ENCODE measurements at regions of chr4 and their contacts with region 1.

Region 1: DNA sequence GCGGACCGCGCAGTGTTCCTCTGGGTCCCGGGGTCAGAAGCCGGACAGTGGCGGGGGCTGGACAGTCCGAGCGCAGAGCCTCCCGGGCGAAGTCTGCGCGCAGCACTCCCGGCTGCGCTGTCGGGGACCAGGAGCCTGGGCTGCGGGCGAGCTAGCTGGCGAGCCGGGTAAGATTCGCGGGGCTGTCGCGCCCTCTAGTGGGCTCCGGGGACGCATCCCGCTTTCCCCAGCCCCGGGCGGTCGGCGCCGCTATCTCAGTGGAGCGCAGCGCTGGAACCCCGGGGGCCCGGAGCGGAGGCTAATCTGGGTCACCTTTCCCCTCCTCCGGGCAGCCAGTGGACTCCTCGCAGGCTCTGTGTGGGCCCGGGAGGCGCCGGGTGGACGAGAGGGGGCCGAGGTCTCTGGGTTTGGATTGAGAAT is 4.2 kb downstream of the PDGFRA start:
- H3K4me3 Mint-ChIP-seq: peak overlapping the region; percentile 77
- H3K27ac Mint-ChIP-seq: peak overlapping the region; percentile 38
- H3K4me1 Mint-ChIP-seq: peaks cover 52% of the 10 kb centered on the region
- H3K27me3 Mint-ChIP-seq: peaks cover 75% of the 10 kb centered on the region

Region 2: GRCh38 chr4:53015681-53016080 is 1217.6 kb before region 1 on chr4:
- intact Hi-C with region 1: loop called (anchors 5 kb)
- H3K4me3 Mint-ChIP-seq: no peak overlapping the region
- H3K27ac Mint-ChIP-seq: no peak overlapping the region
- H3K4me1 Mint-ChIP-seq: peaks cover 21% of the 10 kb centered on the region
- H3K27me3 Mint-ChIP-seq: no peaks in the 10 kb centered on the region

Region 3: DNA sequence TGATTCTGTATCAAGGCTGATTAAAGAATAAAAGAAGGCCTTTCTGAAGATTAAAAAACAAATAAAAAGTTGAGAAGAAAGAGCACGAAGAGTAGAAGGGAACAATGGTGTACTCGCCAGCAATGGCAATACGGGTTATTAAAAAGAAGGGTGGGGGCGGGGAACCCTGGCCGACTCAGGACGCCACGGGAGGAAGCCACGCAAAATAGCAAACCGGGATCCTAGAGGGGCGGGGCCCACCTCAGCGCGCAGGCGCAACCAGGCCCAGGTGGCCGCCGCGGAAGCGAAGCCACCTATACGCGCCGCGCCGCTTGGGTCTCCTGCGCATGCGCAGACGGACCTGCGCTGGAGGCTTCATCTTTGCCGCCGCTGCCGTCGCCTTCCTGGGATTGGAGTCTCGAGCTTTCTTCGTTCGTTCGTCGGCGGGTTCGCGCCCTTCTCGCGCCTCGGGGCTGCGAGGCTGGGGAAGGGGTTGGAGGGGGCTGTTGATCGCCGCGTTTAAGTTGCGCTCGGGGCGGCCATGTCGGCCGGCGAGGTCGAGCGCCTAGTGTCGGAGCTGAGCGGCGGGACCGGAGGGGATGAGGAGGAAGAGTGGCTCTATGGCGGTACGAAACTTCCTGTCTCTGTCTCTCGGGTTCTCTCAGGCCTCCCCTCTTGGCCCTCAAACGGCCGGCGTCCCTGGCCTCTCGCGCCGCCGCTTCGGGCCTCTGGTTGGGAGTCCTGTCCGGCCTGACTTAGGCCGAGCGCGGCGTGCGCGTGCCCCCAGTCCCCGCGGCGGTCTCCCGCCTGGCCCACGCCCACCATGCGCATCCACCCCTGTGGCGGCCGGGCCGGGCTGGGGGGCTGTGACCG is 855.7 kb before region 1 on chr4 and contains the start of gene FIP1L1:
- intact Hi-C with region 1: loop called (anchors 5 kb)
- H3K4me3 Mint-ChIP-seq: peak within 1 kb of the TSS; percentile 99
- H3K27ac Mint-ChIP-seq: peak within 1 kb of the TSS; percentile 98
- H3K4me1 Mint-ChIP-seq: peaks cover 27% of the 10 kb centered on the region
- H3K27me3 Mint-ChIP-seq: no peaks in the 10 kb centered on the region

Region 4: DNA sequence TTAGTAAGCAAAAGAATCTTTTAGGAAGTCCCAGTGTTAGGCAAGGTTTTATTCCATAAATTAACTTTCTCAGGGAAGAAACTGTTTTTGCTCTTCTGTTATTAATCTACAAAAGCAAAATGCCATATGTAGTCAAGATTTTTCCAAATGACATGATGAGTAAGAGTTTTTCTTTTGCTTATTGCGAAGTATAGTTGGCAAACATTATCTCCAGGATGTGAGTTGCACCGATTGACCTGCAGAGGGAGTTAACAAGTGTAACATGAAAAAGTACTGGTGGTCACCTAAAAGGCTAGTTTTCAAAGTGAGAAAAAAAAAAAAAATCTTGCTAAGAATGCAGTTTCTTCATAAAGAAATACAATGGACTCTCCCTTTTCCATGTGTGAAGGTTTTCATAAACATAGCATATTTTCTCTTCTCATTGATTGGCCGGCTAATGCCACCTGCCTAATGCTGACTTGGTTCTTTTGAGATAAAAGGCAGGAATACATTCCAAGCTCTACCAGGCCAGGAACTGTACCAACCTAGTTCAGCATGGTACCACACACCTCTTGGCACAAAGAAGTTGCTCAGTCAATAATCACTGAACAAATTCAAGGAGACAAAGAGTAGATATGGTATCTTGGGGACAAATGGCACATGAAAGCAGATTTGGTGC is 742.2 kb before region 1 on chr4:
- intact Hi-C with region 1: loop called (anchors 10 kb)
- H3K4me3 Mint-ChIP-seq: no peak overlapping the region
- H3K27ac Mint-ChIP-seq: no peak overlapping the region
- H3K4me1 Mint-ChIP-seq: no peaks in the 10 kb centered on the region
- H3K27me3 Mint-ChIP-seq: peaks cover 4% of the 10 kb centered on the region

Region 5: DNA sequence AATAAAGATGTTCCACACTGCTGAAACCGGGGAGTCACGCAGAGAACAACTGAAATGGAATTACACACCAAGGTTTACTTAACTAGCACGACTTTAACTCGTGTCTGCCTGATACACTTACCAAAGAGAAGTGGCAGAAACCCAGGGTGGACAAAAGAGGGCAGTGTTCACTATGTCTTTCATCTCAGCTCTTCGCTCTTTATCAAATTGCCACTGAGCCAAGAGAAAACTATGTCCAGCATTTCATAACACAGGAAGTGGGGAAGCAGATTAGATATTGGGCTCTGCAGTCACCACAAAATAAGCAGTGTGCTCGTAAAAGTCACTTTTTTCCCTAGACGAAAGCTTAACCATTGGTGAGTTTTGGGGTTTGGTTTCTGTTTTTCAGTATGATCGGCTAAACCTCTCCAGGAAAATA is 324.6 kb before region 1 on chr4:
- intact Hi-C with region 1: loop called (anchors 2 kb)
- H3K4me3 Mint-ChIP-seq: peak overlapping the region; percentile 26
- H3K27ac Mint-ChIP-seq: no peak overlapping the region
- H3K4me1 Mint-ChIP-seq: peaks cover 20% of the 10 kb centered on the region
- H3K27me3 Mint-ChIP-seq: peaks cover 27% of the 10 kb centered on the region

Measured in dendritic cell treated with granulocyte-macrophage colony-stimulating factor and Interleukin-4, amounts not matched to agents 40 ng/mL and 50 ng/mL, for 4 days (primary cell).